ENCODE measurements at regions of chr9 and their contacts with region 1.

Region 1: GRCh38 chr9:33404788-33405362 is 2.5 kb upstream of the AQP7 start:
- DNase-seq: no peak
- ATAC-seq: no peak
- H3K4me3 Mint-ChIP-seq: no peak overlapping the region
- H3K27ac Mint-ChIP-seq: no peak overlapping the region
- H3K4me1 Mint-ChIP-seq: no peaks in the 10 kb centered on the region
- H3K27me3 Mint-ChIP-seq: no peaks in the 10 kb centered on the region; the same call in 1 of the 2 replicates
- CTCF ChIP-seq: no peak

Region 2: GRCh38 chr9:33202552-33203201 is 202.2 kb before region 1 on chr9:
- CTCF ChIA-PET with region 1: no interaction called
- POLR2A ChIA-PET with region 1: no interaction called
- DNase-seq: no peak
- ATAC-seq: peak; percentile 44
- H3K4me3 Mint-ChIP-seq: no peak overlapping the region
- H3K27ac Mint-ChIP-seq: no peak overlapping the region
- H3K4me1 Mint-ChIP-seq: peaks cover 4% of the 10 kb centered on the region; the same call in 1 of the 2 replicates
- H3K27me3 Mint-ChIP-seq: peaks cover 25% of the 10 kb centered on the region
- CTCF ChIP-seq: no peak

Region 3: GRCh38 chr9:33290247-33291030 is 114.4 kb before region 1 on chr9 and contains the start of gene NFX1:
- CTCF ChIA-PET with region 1: no interaction called
- POLR2A ChIA-PET with region 1: no interaction called
- DNase-seq: peak; percentile 96
- ATAC-seq: peak; percentile 90
- H3K4me3 Mint-ChIP-seq: peak within 1 kb of the TSS; percentile 99
- H3K27ac Mint-ChIP-seq: peak within 1 kb of the TSS; percentile 99
- H3K4me1 Mint-ChIP-seq: peaks cover 14% of the 10 kb centered on the region
- H3K27me3 Mint-ChIP-seq: no peaks in the 10 kb centered on the region
- CTCF ChIP-seq: no peak
- total RNA-seq, gene NFX1: 25.4 to 30.9 TPM (median 26.5 TPM) in 3 replicates

Region 4: DNA sequence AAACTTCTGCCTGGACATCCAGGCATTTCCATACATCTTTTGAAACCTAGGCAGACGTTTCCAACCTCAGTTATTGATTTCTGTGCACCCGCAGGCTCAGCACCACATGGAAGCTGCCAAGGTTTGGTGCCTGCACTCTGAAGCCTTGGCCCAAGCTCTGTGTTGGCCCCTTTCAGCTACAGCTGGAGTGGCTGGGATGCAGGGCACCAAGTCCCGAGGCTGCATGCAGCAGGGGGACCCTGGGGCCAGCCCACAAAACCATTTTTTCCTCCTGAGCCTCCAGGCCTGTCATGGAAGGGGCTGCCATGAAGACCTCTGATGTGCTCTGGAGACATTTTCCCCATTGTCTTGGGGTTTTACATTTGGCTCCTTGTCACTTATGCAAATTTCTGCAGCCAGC is 64.7 kb before region 1 on chr9:
- CTCF ChIA-PET with region 1: no interaction called
- POLR2A ChIA-PET with region 1: no interaction called
- DNase-seq: no peak
- ATAC-seq: no peak
- H3K4me3 Mint-ChIP-seq: no peak overlapping the region
- H3K27ac Mint-ChIP-seq: no peak overlapping the region
- H3K4me1 Mint-ChIP-seq: no peaks in the 10 kb centered on the region
- H3K27me3 Mint-ChIP-seq: no peaks in the 10 kb centered on the region
- CTCF ChIP-seq: no peak

Region 5: GRCh38 chr9:33393581-33393980 is 11.3 kb before region 1 on chr9:
- CTCF ChIA-PET with region 1: interaction called, 12 read pairs
- POLR2A ChIA-PET with region 1: no interaction called
- DNase-seq: no peak
- ATAC-seq: no peak
- H3K4me3 Mint-ChIP-seq: no peak overlapping the region
- H3K27ac Mint-ChIP-seq: peak overlapping the region; percentile 13; the same call in 1 of the 2 replicates
- H3K4me1 Mint-ChIP-seq: peaks cover 17% of the 10 kb centered on the region
- H3K27me3 Mint-ChIP-seq: no peaks in the 10 kb centered on the region
- CTCF ChIP-seq: no peak

Region 6: GRCh38 chr9:33446946-33447798 is 42.3 kb after region 1 on chr9 and contains the start of gene AQP3:
- CTCF ChIA-PET with region 1: interaction called, 56 read pairs
- POLR2A ChIA-PET with region 1: no interaction called
- DNase-seq: peak; percentile 86
- ATAC-seq: peak; percentile 81
- H3K4me3 Mint-ChIP-seq: peak within 1 kb of the TSS; percentile 80
- H3K27ac Mint-ChIP-seq: no peak within 1 kb of the TSS
- H3K4me1 Mint-ChIP-seq: peaks cover 35% of the 10 kb centered on the region
- H3K27me3 Mint-ChIP-seq: peaks cover 28% of the 10 kb centered on the region
- CTCF ChIP-seq: no peak
- total RNA-seq, gene AQP3: 3.0 to 3.6 TPM (median 3.5 TPM) in 3 replicates

Region 7: DNA sequence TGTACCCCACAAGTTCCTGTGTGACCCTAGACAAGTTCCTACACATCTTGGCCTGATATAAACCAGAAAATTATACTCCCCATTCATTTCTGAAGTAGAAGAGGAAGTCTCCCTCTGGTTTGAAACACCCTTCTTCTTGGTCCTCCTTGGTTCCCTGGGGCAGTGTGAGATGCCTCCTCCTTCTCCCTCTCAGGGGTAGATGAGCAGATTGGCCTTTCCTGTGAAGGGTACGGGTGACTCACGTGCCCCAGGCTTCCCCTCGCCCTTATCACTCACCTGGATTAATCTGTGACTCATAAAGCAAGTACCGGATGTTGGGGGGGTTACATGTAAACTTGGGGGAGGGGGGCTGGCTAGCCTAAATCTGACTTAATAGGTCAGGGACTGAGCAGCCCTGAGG is 53.6 kb after region 1 on chr9:
- CTCF ChIA-PET with region 1: interaction called, 56 read pairs
- POLR2A ChIA-PET with region 1: no interaction called
- DNase-seq: no peak
- ATAC-seq: no peak
- H3K4me3 Mint-ChIP-seq: no peak overlapping the region
- H3K27ac Mint-ChIP-seq: peak overlapping the region; percentile 28
- H3K4me1 Mint-ChIP-seq: peaks cover 1% of the 10 kb centered on the region
- H3K27me3 Mint-ChIP-seq: no peaks in the 10 kb centered on the region
- CTCF ChIP-seq: no peak

Region 8: DNA sequence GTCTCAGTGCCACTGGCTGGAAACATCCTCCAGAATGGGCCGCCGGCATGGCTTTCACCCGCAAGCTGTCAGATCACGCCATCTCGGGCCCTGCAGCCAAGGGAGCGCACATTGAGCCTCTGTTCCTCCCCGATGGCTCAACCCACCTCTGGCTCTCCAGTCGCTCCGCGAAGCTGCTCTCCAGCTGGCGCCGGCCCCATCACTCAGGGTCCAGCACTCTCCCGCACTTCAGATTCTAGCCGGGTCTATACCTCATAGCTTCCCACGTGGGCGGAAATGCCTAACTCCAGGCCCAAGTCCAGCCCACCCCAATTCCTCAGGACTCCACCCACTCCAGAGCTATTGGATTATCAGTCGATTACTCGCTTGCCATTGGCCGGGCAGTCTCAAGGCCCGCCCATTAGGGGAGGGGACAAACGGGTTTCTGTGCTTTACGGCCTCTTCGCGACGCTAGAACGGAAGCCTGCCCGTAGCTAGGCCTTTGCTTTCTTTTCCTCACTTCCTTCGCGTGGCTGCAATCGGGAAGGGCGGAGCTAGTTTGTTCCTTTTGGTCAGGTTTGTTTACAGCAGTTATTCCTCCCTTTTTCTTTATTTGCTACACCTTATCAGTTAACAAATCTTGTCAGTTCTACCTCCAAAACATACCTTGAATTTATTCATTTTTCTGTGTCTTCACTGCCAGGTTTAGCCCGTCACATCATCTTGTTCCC is 68.9 kb after region 1 on chr9 and contains the start of gene NOL6:
- CTCF ChIA-PET with region 1: interaction called, 20 read pairs
- POLR2A ChIA-PET with region 1: no interaction called
- DNase-seq: peak; percentile 98
- ATAC-seq: peak; percentile 100
- H3K4me3 Mint-ChIP-seq: peak within 1 kb of the TSS; percentile 96
- H3K27ac Mint-ChIP-seq: peak within 1 kb of the TSS; percentile 97
- H3K4me1 Mint-ChIP-seq: peaks cover 10% of the 10 kb centered on the region; the same call in 1 of the 2 replicates
- H3K27me3 Mint-ChIP-seq: no peaks in the 10 kb centered on the region
- CTCF ChIP-seq: no peak
- total RNA-seq, gene NOL6: 38.6 to 48.5 TPM (median 42.2 TPM) in 3 replicates